CD8-positive, alpha-beta T cell (primary cell): ENCODE measurements at regions of chrX and their contacts with region 1.

Region 1: DNA sequence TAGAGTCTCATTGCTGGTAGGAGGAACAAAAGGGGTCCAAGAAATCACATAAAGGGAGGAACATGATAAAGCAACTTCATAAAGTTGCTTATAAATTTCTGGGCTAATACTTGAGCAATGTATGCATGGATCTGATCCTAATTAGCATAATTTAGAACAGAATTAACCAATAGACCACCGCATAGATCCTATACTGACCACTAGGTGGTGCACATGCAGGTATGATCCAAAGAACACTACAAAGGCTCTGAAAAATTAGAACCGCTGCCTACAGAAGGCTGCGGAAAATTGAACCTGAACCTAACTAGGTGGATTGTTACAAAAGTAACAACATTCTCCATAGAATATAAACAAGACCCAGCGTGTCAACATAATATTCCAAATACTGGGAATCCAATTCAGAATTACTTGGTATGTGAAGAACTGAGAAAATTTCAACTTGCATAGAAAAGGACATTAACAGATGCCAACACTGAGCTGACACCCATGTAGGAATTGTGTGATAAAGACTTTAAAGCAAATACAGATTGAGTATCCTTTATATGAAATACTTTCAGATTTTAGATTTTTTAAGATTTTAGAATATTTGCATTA is 23.3 kb downstream of the BRCC3 start:
- DNase-seq: peak in 6 of 9 experiments; percentile 2 to 70 (median 28)
- ATAC-seq: peak; percentile 84
- H3K4me3 ChIP-seq: no peak overlapping the region
- H3K4me3 Mint-ChIP-seq: no peak overlapping the region
- H3K27ac ChIP-seq: no peak overlapping the region
- H3K27ac Mint-ChIP-seq: no peak overlapping the region
- H3K4me1 ChIP-seq: no peaks in the 10 kb centered on the region
- H3K4me1 Mint-ChIP-seq: peaks cover 4% of the 10 kb centered on the region
- H3K27me3 ChIP-seq: no peaks in the 10 kb centered on the region
- H3K27me3 Mint-ChIP-seq: no peaks in the 10 kb centered on the region
- CTCF ChIP-seq: peak; percentile 54

Region 2: GRCh38 chrX:153735274-153735673 is 1359.3 kb before region 1 on chrX:
- CTCF ChIA-PET with region 1: no interaction called
- POLR2A ChIA-PET with region 1: no interaction called
- intact Hi-C with region 1: no loop called
- DNase-seq: peak in 2 of 9 experiments; percentile 50 to 58
- ATAC-seq: peak; percentile 62
- H3K4me3 ChIP-seq: no peak overlapping the region
- H3K4me3 Mint-ChIP-seq: no peak overlapping the region
- H3K27ac ChIP-seq: no peak overlapping the region
- H3K27ac Mint-ChIP-seq: no peak overlapping the region
- H3K4me1 ChIP-seq: peaks cover 12% of the 10 kb centered on the region
- H3K4me1 Mint-ChIP-seq: peaks cover 21% of the 10 kb centered on the region
- H3K27me3 ChIP-seq: no peaks in the 10 kb centered on the region
- H3K27me3 Mint-ChIP-seq: no peaks in the 10 kb centered on the region
- CTCF ChIP-seq: no peak

Region 3: GRCh38 chrX:155179346-155179986 is 84.9 kb after region 1 on chrX:
- CTCF ChIA-PET with region 1: no interaction called
- POLR2A ChIA-PET with region 1: no interaction called
- intact Hi-C with region 1: loop called in 1 of 2 experiments (anchors 10 kb)
- DNase-seq: peak in 1 of 9 experiments; percentile 4
- ATAC-seq: no peak
- H3K4me3 ChIP-seq: no peak overlapping the region
- H3K4me3 Mint-ChIP-seq: no peak overlapping the region
- H3K27ac ChIP-seq: no peak overlapping the region
- H3K27ac Mint-ChIP-seq: no peak overlapping the region
- H3K4me1 ChIP-seq: no peaks in the 10 kb centered on the region
- H3K4me1 Mint-ChIP-seq: no peaks in the 10 kb centered on the region
- H3K27me3 ChIP-seq: no peaks in the 10 kb centered on the region
- H3K27me3 Mint-ChIP-seq: no peaks in the 10 kb centered on the region
- CTCF ChIP-seq: no peak

Region 4: GRCh38 chrX:155216179-155216939 is 121.8 kb after region 1 on chrX and contains the start of gene VBP1:
- CTCF ChIA-PET with region 1: interaction called, 22 read pairs
- POLR2A ChIA-PET with region 1: no interaction called
- intact Hi-C with region 1: loop called (anchors 1 to 2 kb)
- DNase-seq: peak; percentile 66 to 94 (median 85)
- ATAC-seq: peak; percentile 97
- H3K4me3 ChIP-seq: peak within 1 kb of the TSS; percentile 72 to 76
- H3K4me3 Mint-ChIP-seq: peak within 1 kb of the TSS; percentile 89
- H3K27ac ChIP-seq: peak within 1 kb of the TSS; percentile 56 to 87
- H3K27ac Mint-ChIP-seq: peak within 1 kb of the TSS; percentile 94
- H3K4me1 ChIP-seq: peaks cover 10% of the 10 kb centered on the region
- H3K4me1 Mint-ChIP-seq: peaks cover 29% of the 10 kb centered on the region
- H3K27me3 ChIP-seq: no peaks in the 10 kb centered on the region
- H3K27me3 Mint-ChIP-seq: no peaks in the 10 kb centered on the region
- CTCF ChIP-seq: no peak
- total RNA-seq, gene VBP1: 10.9 to 12.6 TPM

Region 5: DNA sequence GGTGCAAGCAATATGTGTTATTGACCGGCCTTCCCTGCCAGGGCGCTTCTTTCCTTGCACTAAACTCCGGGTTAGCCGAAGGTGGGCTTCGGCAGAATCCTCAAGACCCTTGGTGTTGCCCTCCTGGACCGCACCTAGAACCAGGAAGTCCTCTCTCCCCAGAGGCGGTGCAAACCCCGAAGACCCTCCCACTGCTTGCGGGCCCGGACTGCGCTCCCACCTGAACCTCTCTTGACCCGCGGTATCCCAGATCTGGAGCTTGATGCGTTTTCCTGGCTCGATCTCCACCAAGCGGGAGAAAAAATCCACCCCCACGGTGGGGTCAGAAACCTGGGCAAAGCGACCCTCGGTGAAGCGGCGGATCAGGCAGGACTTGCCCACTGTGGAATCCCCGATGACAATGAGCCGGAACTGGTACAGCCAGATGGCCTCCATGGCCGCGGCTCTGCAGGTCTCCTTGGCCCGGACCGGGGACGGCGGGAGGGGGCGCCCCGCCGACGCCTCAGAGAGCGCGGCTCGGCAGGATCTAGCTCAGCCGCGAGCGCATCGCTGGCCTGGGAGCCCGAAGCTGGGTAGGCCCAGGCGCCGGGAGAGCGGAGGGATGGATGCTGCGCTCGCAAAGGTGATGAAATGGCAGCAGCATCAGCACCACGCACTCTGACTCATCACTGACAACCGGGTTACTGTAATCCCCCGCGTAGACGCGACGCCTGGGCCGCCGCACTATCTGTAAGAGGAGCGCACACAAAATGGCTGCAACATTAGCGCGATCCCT is 169.5 kb after region 1 on chrX and contains the start of gene RAB39B:
- CTCF ChIA-PET with region 1: no interaction called
- POLR2A ChIA-PET with region 1: no interaction called
- intact Hi-C with region 1: loop called in 1 of 2 experiments (anchors 1 kb)
- DNase-seq: peak; percentile 29 to 84 (median 68)
- ATAC-seq: peak; percentile 93
- H3K4me3 ChIP-seq: peak within 1 kb of the TSS; percentile 69 to 79
- H3K4me3 Mint-ChIP-seq: peak within 1 kb of the TSS; percentile 68
- H3K27ac ChIP-seq: peak within 1 kb of the TSS; percentile 86 to 88
- H3K27ac Mint-ChIP-seq: peak within 1 kb of the TSS; percentile 78
- H3K4me1 ChIP-seq: peaks cover 17% of the 10 kb centered on the region
- H3K4me1 Mint-ChIP-seq: peaks cover 30% of the 10 kb centered on the region
- H3K27me3 ChIP-seq: no peaks in the 10 kb centered on the region
- H3K27me3 Mint-ChIP-seq: no peaks in the 10 kb centered on the region
- CTCF ChIP-seq: no peak
- total RNA-seq, gene RAB39B: 3.5 to 3.6 TPM

Region 6: DNA sequence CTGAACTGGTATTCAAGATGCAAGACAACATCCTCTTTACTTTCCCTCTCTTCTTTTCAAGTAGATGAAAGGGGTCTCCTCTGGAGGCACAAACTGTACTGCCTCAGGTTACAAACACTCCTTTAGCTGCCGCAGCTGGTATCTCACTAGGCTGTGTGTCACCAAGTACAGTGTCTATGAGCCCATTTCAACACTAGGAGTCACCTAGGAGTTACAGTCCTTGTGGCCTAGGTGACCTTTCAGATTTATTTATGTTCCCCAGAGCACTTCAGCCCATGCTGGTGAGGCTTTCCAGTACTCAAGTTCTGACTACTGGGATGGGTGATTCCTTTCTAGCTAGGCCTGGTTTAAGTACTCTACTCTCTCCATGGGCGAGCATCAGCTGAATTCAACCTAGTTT is 550.6 kb after region 1 on chrX:
- CTCF ChIA-PET with region 1: no interaction called
- POLR2A ChIA-PET with region 1: no interaction called
- intact Hi-C with region 1: loop called (anchors 5 kb)
- DNase-seq: no peak
- ATAC-seq: no peak
- H3K4me3 ChIP-seq: no peak overlapping the region
- H3K4me3 Mint-ChIP-seq: no peak overlapping the region
- H3K27ac ChIP-seq: no peak overlapping the region
- H3K27ac Mint-ChIP-seq: no peak overlapping the region
- H3K4me1 ChIP-seq: no peaks in the 10 kb centered on the region
- H3K4me1 Mint-ChIP-seq: peaks cover 6% of the 10 kb centered on the region
- H3K27me3 ChIP-seq: no peaks in the 10 kb centered on the region
- H3K27me3 Mint-ChIP-seq: no peaks in the 10 kb centered on the region
- CTCF ChIP-seq: no peak

Region 7: GRCh38 chrX:155819966-155820491 is 725.5 kb after region 1 on chrX:
- CTCF ChIA-PET with region 1: no interaction called
- POLR2A ChIA-PET with region 1: no interaction called
- intact Hi-C with region 1: loop called in 1 of 2 experiments (anchors 2 kb)
- DNase-seq: peak in 7 of 9 experiments; percentile 8 to 62 (median 36)
- ATAC-seq: no peak
- H3K4me3 ChIP-seq: no peak overlapping the region
- H3K4me3 Mint-ChIP-seq: no peak overlapping the region
- H3K27ac ChIP-seq: no peak overlapping the region
- H3K27ac Mint-ChIP-seq: no peak overlapping the region
- H3K4me1 ChIP-seq: no peaks in the 10 kb centered on the region
- H3K4me1 Mint-ChIP-seq: no peaks in the 10 kb centered on the region
- H3K27me3 ChIP-seq: peaks cover 0 to 2% of the 10 kb centered on the region in 2 experiments
- H3K27me3 Mint-ChIP-seq: peaks cover 15% of the 10 kb centered on the region
- CTCF ChIP-seq: peak; percentile 39